ENCODE measurements at regions of chr14 and their contacts with region 1.

Region 1: DNA sequence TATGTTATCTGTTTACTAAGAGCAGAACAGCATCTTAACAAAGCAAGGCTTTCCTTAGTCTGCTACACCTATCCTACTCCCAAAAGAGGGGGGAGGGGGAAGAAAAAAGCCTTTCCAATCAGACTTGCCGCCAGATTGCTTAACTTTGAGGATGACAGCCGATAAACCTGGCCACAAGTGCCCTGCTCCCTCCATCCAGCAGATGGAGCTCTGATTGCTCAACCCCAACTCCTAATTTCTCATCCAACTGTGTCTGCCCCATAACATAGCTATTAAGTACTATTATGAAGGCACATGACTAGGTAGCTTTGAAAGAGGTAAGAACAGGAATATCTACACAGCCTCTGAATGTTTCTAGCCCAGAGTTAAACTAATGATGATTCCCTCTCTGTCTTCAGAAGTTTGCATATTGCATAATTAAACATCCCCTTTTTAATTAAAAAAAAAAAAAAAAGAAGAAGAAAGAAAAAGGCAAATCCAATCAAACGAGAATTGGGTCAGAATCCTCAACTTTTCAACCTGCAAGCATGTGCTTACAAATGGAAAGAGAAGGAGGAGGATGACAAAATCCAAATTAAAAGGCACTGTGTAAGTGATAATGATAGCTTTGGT is 247.4 kb downstream of the GALC start:
- DNase-seq: peak; percentile 39
- CTCF ChIP-seq: peak; percentile 77

Region 2: DNA sequence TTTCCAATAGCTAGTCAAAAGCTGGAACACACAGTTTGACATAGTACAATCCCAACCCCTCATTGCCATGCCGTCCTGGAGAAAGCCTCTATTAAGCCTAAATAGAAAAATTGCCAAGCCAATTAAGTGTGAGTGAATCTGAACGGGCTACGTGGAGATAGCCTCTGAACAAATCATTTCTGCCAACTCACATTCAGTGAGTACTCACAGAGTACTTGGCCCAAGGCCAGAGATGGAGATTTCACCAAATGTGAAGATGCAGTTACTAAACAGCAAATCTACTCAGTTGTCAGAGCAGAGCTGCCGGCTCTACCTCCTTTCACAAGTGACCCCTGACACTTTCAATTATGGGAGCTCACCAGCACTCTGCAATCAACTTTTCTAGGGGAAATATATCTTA is 102.6 kb before region 1 on chr14:
- CTCF ChIA-PET with region 1: no interaction called
- POLR2A ChIA-PET with region 1: no interaction called
- DNase-seq: no peak
- CTCF ChIP-seq: no peak

Region 3: DNA sequence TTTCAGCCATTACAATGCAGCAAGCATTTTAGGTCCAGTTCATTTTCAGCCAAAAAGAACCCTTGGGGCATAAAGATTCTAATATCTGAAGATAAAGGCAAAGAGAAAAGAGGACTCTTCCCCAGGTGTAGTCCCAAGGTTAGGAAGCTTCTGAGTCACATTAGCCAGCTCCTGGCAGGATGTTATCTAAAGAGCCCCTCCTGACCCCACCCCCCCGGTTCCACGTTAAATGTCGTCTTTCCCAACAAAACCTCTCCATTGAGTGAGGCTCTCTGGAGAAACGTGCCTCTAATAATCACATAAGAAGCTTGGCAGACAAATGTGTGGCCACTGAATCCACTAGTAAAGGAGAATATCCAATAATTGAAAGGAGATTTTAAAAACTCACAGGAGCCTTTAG is 20.3 kb before region 1 on chr14:
- CTCF ChIA-PET with region 1: interaction called, 18 read pairs
- POLR2A ChIA-PET with region 1: no interaction called
- DNase-seq: no peak
- CTCF ChIP-seq: no peak

Region 4: GRCh38 chr14:87732562-87732961 is 13.1 kb before region 1 on chr14:
- CTCF ChIA-PET with region 1: interaction called, 51 read pairs
- POLR2A ChIA-PET with region 1: no interaction called
- DNase-seq: no peak
- CTCF ChIP-seq: no peak

Region 5: DNA sequence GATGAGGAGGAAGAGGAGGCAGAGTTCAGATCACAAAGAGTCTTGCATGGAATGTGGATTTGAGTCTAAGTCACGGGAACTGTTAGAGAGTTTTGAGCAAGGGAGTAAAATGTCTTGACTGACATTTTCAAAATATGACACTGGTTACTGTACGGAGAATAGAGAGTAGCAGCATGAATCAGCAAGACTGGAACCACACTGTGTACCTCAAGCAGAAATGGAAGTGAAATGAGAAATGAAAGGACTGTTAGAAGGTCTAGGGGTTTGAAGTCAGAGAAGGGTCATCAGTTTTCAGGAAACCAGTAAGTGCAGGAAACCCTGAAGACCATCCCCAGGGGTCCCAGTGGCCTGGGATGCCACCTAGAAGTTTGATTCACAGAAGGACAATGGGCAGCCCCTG is 11.0 kb after region 1 on chr14:
- CTCF ChIA-PET with region 1: interaction called, 11 read pairs
- POLR2A ChIA-PET with region 1: no interaction called
- DNase-seq: no peak
- CTCF ChIP-seq: no peak

Region 6: GRCh38 chr14:87896393-87897380 is 151.1 kb after region 1 on chr14:
- CTCF ChIA-PET with region 1: interaction called, 81 read pairs
- POLR2A ChIA-PET with region 1: no interaction called
- DNase-seq: peak; percentile 27
- CTCF ChIP-seq: peak; percentile 60